ENCODE measurements at regions of chr2 and their contacts with region 1.

Region 1: GRCh38 chr2:86347401-86347800 is 10.0 kb upstream of the REEP1 start:
- DNase-seq: no peak
- ATAC-seq: no peak
- H3K4me3 ChIP-seq: no peak overlapping the region
- H3K27ac ChIP-seq: no peak overlapping the region
- H3K4me1 ChIP-seq: no peaks in the 10 kb centered on the region
- H3K27me3 ChIP-seq: peaks cover 7 to 11% of the 10 kb centered on the region in 2 experiments; a peak in 4 of 5 replicates
- CTCF ChIP-seq: no peak
- EP300 ChIP-seq: no peak
- POLR2A ChIP-seq: no peak
- RAD21 ChIP-seq: no peak

Region 2: GRCh38 chr2:86221066-86221684 is 126.2 kb before region 1 on chr2:
- CTCF ChIA-PET with region 1: no interaction called
- POLR2A ChIA-PET with region 1: no interaction called
- in situ Hi-C with region 1: no loop called
- intact Hi-C with region 1: no loop called
- DNase-seq: peak; percentile 74 to 81 (median 78)
- ATAC-seq: peak; percentile 81
- H3K4me3 ChIP-seq: no peak overlapping the region
- H3K27ac ChIP-seq: no peak overlapping the region
- H3K4me1 ChIP-seq: peaks cover 21 to 29% of the 10 kb centered on the region in 2 experiments; a peak in 3 of 5 replicates
- H3K27me3 ChIP-seq: no peaks in the 10 kb centered on the region
- CTCF ChIP-seq: peak; percentile 94 to 99 (median 98)
- EP300 ChIP-seq: no peak
- POLR2A ChIP-seq: no peak
- RAD21 ChIP-seq: peak; percentile 88 to 89

Region 3: GRCh38 chr2:86286516-86286915 is 60.9 kb before region 1 on chr2:
- CTCF ChIA-PET with region 1: no interaction called
- POLR2A ChIA-PET with region 1: no interaction called
- in situ Hi-C with region 1: no loop called
- intact Hi-C with region 1: loop called (anchors 5 kb)
- DNase-seq: no peak
- ATAC-seq: peak; percentile 59
- H3K4me3 ChIP-seq: no peak overlapping the region
- H3K27ac ChIP-seq: no peak overlapping the region
- H3K4me1 ChIP-seq: no peaks in the 10 kb centered on the region
- H3K27me3 ChIP-seq: peaks cover 10 to 42% of the 10 kb centered on the region in 2 experiments; a peak in 4 of 5 replicates
- CTCF ChIP-seq: no peak
- EP300 ChIP-seq: no peak
- POLR2A ChIP-seq: no peak
- RAD21 ChIP-seq: no peak

Region 4: GRCh38 chr2:86368161-86368824 is 20.9 kb after region 1 on chr2:
- CTCF ChIA-PET with region 1: no interaction called
- POLR2A ChIA-PET with region 1: no interaction called
- in situ Hi-C with region 1: no loop called
- intact Hi-C with region 1: no loop called
- DNase-seq: peak; percentile 63 to 82 (median 66)
- ATAC-seq: peak; percentile 88
- H3K4me3 ChIP-seq: no peak overlapping the region
- H3K27ac ChIP-seq: no peak overlapping the region
- H3K4me1 ChIP-seq: no peaks in the 10 kb centered on the region; a peak in 2 of 5 replicates
- H3K27me3 ChIP-seq: peaks cover 2 to 13% of the 10 kb centered on the region in 2 experiments; a peak in 4 of 5 replicates
- CTCF ChIP-seq: peak; percentile 69 to 76 (median 72)
- EP300 ChIP-seq: no peak
- POLR2A ChIP-seq: no peak
- RAD21 ChIP-seq: peak; percentile 45 to 50